A549 (cell line): ENCODE measurements at regions of chr1 and their contacts with region 1.

Region 1: GRCh38 chr1:11645670-11646265 is 8.5 kb downstream of the FBXO2 start:
- DNase-seq: peak; percentile 58 to 74
- ATAC-seq: peak; percentile 64 to 79; a peak in 5 of 6 replicates
- H3K4me3 ChIP-seq: no peak overlapping the region
- H3K27ac ChIP-seq: no peak overlapping the region
- H3K4me1 ChIP-seq: peaks cover 5% of the 10 kb centered on the region
- CTCF ChIP-seq: peak; percentile 73
- EP300 ChIP-seq: no peak
- POLR2A ChIP-seq: no peak
- RAD21 ChIP-seq: peak; percentile 64 to 72

Region 2: DNA sequence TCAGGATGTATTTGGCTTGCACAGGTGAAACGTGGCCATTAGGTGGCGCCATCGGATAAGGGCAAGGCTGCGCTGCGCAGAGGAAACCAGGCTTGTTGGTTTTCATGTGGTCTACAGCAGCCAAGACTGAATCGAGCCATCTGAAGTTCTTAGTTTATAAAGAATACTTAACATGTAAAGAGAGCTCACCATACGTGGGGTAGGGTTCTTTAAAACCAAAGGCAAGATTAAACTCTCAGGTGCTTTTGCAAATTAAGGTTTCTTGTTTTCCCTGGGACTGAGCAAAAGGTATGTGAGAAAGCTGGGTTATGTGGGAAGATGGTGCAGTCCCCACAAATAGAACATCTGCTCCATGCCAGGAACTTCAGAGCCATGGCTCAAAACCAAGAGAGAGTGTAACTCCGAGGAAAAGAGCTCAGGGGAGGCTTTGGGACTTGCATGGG is 608.0 kb before region 1 on chr1:
- CTCF ChIA-PET with region 1: interaction called, 124 read pairs
- POLR2A ChIA-PET with region 1: no interaction called
- DNase-seq: peak; percentile 74 to 78
- ATAC-seq: peak; percentile 90 to 95
- H3K4me3 ChIP-seq: no peak overlapping the region
- H3K27ac ChIP-seq: no peak overlapping the region
- H3K4me1 ChIP-seq: no peaks in the 10 kb centered on the region
- CTCF ChIP-seq: peak; percentile 86
- EP300 ChIP-seq: no peak
- POLR2A ChIP-seq: no peak
- RAD21 ChIP-seq: peak; percentile 90 to 96

Region 3: DNA sequence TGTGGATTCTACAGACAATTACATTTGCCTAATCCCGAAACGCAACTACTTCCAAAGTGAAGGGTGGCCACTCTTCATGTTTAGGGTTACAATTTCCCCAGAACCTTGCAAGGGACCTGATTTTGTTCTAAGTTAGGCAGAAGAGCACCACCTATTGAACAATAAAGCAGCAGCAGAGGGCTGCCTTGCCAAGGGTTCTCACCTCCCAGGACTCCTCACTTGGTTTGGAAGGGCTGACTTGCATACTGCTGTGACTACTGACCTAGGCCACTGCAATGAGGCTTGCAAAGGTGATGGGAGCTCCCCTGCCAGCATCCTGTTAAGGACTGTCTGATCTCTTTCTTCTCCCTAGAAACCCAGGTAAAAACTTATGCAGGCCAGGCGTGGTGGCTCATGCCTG is 397.6 kb before region 1 on chr1:
- CTCF ChIA-PET with region 1: interaction called, 50 read pairs
- POLR2A ChIA-PET with region 1: no interaction called
- DNase-seq: no peak
- ATAC-seq: peak; percentile 43 to 62; a peak in 2 of 6 replicates
- H3K4me3 ChIP-seq: no peak overlapping the region
- H3K27ac ChIP-seq: no peak overlapping the region
- H3K4me1 ChIP-seq: no peaks in the 10 kb centered on the region
- CTCF ChIP-seq: no peak
- EP300 ChIP-seq: no peak
- POLR2A ChIP-seq: no peak
- RAD21 ChIP-seq: no peak

Region 4: GRCh38 chr1:11335417-11336056 is 310.2 kb before region 1 on chr1:
- CTCF ChIA-PET with region 1: interaction called, 22 read pairs
- POLR2A ChIA-PET with region 1: no interaction called
- DNase-seq: no peak
- ATAC-seq: no peak
- H3K4me3 ChIP-seq: no peak overlapping the region
- H3K27ac ChIP-seq: no peak overlapping the region
- H3K4me1 ChIP-seq: no peaks in the 10 kb centered on the region
- CTCF ChIP-seq: no peak
- EP300 ChIP-seq: no peak
- POLR2A ChIP-seq: no peak
- RAD21 ChIP-seq: no peak

Region 5: GRCh38 chr1:11598461-11598860 is 47.3 kb before region 1 on chr1:
- CTCF ChIA-PET with region 1: no interaction called
- POLR2A ChIA-PET with region 1: no interaction called
- DNase-seq: no peak
- ATAC-seq: no peak
- H3K4me3 ChIP-seq: no peak overlapping the region
- H3K27ac ChIP-seq: no peak overlapping the region
- H3K4me1 ChIP-seq: no peaks in the 10 kb centered on the region
- CTCF ChIP-seq: no peak
- EP300 ChIP-seq: no peak
- POLR2A ChIP-seq: no peak
- RAD21 ChIP-seq: no peak

Region 6: DNA sequence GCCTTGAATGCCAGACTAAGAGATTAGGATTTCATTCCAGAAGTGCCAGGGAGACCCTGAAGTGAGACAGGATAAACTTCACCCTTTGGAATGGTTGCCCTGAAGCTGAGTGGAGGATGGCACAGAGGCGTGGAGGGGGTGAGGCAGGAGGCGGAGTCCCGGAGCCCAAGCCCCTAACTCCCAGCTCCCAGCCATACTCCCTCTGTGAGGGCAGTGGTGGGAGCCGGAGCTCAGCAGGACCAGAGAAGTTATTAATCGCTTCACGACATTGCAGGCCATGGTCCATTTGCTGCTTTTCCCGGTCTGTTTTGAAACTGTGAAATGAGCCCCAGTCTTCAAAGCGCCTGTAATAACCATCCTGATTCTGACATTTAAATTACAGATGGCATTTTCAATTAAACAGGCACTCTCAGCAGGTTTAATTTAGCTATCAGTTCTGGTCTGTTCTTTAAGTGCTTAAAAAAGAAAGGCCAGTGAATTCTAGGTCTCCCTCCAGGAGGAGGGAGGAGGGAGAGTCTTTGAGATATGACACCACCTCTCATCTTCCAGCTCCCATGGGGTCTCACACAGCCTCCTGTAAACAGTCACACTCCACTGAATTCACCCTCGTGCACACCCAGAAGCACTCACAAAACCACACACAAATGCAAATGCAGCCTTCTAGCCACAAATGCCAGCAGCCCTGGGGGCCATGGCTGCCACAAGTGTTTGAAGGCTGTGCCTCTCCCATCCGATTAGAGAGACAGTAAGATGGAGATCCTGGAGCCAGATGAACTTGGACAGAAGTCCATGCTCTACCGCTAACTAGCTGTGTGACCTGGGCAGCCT is 11.2 kb before region 1 on chr1:
- CTCF ChIA-PET with region 1: interaction called, 17 read pairs
- POLR2A ChIA-PET with region 1: no interaction called
- DNase-seq: no peak
- ATAC-seq: no peak
- H3K4me3 ChIP-seq: no peak overlapping the region
- H3K27ac ChIP-seq: no peak overlapping the region
- H3K4me1 ChIP-seq: no peaks in the 10 kb centered on the region
- CTCF ChIP-seq: no peak
- EP300 ChIP-seq: no peak
- POLR2A ChIP-seq: no peak
- RAD21 ChIP-seq: no peak

Region 7: DNA sequence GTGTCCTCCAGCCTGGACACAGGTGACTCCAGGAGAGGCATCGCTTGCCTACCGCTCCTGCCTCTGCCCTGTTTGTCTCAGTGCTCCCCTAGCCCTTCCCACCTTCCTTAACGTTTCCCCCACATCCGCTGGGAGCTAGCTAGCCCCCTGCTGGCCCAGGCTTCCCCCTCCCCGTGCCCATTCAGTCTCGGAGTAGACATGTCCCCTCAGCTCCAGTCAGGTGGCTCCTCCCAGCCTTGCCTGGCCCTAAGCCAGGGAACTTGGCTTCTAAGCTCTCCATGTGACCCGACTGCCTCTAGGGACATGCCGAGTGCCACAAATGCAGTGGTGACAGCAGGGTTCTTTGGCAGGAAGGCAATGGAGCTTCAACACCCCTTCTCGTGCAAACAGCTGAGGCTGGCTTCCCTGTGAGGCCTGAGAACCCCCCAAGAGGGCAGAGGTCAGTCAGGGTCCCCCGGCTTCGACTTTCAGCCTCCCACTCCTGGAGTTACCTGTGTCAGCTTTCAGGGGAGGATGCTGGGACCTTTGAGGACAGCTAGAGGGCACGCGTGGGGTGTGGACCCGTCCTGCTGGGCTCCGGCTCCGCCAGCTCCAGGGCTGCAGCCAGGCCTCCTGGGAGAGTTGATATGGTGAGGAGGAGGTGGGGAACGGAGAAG is 62.0 kb after region 1 on chr1:
- CTCF ChIA-PET with region 1: interaction called, 16 read pairs
- POLR2A ChIA-PET with region 1: no interaction called
- DNase-seq: no peak
- ATAC-seq: peak in 1 of 2 experiments; percentile 46; a peak in 3 of 6 replicates
- H3K4me3 ChIP-seq: no peak overlapping the region
- H3K27ac ChIP-seq: no peak overlapping the region
- H3K4me1 ChIP-seq: 0 out of 3 replicates have a peak, but pooled peaks cover 4% of the 10 kb centered on the region
- CTCF ChIP-seq: no peak
- EP300 ChIP-seq: no peak
- POLR2A ChIP-seq: no peak
- RAD21 ChIP-seq: no peak

Region 8: GRCh38 chr1:11725616-11726015 is 79.8 kb after region 1 on chr1:
- CTCF ChIA-PET with region 1: interaction called, 107 read pairs
- POLR2A ChIA-PET with region 1: no interaction called
- DNase-seq: no peak
- ATAC-seq: no peak
- H3K4me3 ChIP-seq: no peak overlapping the region
- H3K27ac ChIP-seq: no peak overlapping the region
- H3K4me1 ChIP-seq: no peaks in the 10 kb centered on the region
- CTCF ChIP-seq: no peak
- EP300 ChIP-seq: no peak
- POLR2A ChIP-seq: no peak
- RAD21 ChIP-seq: no peak

Region 9: GRCh38 chr1:12386130-12386529 is 740.4 kb after region 1 on chr1:
- CTCF ChIA-PET with region 1: no interaction called
- POLR2A ChIA-PET with region 1: no interaction called
- DNase-seq: no peak
- ATAC-seq: no peak
- H3K4me3 ChIP-seq: no peak overlapping the region
- H3K27ac ChIP-seq: no peak overlapping the region
- H3K4me1 ChIP-seq: peaks cover 15% of the 10 kb centered on the region
- CTCF ChIP-seq: no peak
- EP300 ChIP-seq: no peak
- POLR2A ChIP-seq: no peak
- RAD21 ChIP-seq: no peak